Activated CD4-positive, alpha-beta memory T cell treated with anti-CD3 and anti-CD28 coated beads, Interleukin-2, amount 10 ng/mL, durations not matched to agents 7 days and 5 days (primary cell): ENCODE measurements at regions of chr11 and their contacts with region 1.

Region 1: GRCh38 chr11:60831143-60831500 is 10.8 kb upstream of the CCDC86 start:
- DNase-seq: peak; percentile 84
- H3K4me3 Mint-ChIP-seq: no peak overlapping the region
- H3K27ac Mint-ChIP-seq: no peak overlapping the region
- H3K4me1 Mint-ChIP-seq: peaks cover 30% of the 10 kb centered on the region
- H3K27me3 Mint-ChIP-seq: peaks cover 7% of the 10 kb centered on the region

Region 2: GRCh38 chr11:60775420-60775961 is 55.6 kb before region 1 on chr11:
- CTCF ChIA-PET with region 1: interaction called, 19 read pairs
- POLR2A ChIA-PET with region 1: no interaction called
- DNase-seq: peak; percentile 82
- H3K4me3 Mint-ChIP-seq: no peak overlapping the region
- H3K27ac Mint-ChIP-seq: no peak overlapping the region
- H3K4me1 Mint-ChIP-seq: peaks cover 4% of the 10 kb centered on the region
- H3K27me3 Mint-ChIP-seq: peaks cover 10% of the 10 kb centered on the region

Region 3: GRCh38 chr11:60810569-60810968 is 20.6 kb before region 1 on chr11:
- CTCF ChIA-PET with region 1: no interaction called
- POLR2A ChIA-PET with region 1: no interaction called
- DNase-seq: no peak
- H3K4me3 Mint-ChIP-seq: no peak overlapping the region
- H3K27ac Mint-ChIP-seq: no peak overlapping the region
- H3K4me1 Mint-ChIP-seq: no peaks in the 10 kb centered on the region
- H3K27me3 Mint-ChIP-seq: peaks cover 10% of the 10 kb centered on the region

Region 4: DNA sequence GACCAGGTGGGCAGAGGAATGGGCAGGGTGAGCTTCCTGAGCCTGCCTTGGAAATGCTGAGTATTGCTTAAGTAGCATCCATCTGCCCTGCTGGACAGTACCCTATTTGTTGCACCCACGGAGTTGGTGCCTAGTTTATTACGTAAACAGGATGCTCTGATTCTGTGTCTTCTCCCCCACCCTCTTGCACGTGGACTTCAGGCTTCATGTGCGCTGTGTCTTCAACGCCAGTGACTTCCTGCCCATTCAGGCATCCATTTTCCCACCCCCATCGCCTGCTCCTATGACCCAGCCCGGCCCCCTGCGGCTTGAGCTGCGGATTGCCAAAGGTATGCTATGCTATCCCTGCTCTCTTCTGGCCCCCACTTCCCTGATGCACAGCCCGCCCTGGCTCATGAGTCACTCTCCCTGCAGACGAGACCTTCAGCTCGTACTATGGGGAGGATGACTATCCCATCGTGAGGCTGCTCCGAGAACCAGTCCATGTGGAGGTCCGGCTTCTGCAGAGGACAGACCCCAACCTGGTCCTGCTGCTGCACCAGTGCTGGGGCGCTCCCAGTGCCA is 41.9 kb after region 1 on chr11:
- CTCF ChIA-PET with region 1: interaction called, 25 read pairs
- POLR2A ChIA-PET with region 1: interaction called, 9 read pairs
- DNase-seq: no peak
- H3K4me3 Mint-ChIP-seq: no peak overlapping the region
- H3K27ac Mint-ChIP-seq: no peak overlapping the region
- H3K4me1 Mint-ChIP-seq: peaks cover 61% of the 10 kb centered on the region
- H3K27me3 Mint-ChIP-seq: no peaks in the 10 kb centered on the region

Region 5: GRCh38 chr11:60906132-60906972 is 75.2 kb after region 1 on chr11 and contains the start of gene PRPF19:
- CTCF ChIA-PET with region 1: interaction called, 87 read pairs
- POLR2A ChIA-PET with region 1: interaction called, 5 read pairs
- DNase-seq: peak; percentile 99
- H3K4me3 Mint-ChIP-seq: peak within 1 kb of the TSS; percentile 83
- H3K27ac Mint-ChIP-seq: peak within 1 kb of the TSS; percentile 88
- H3K4me1 Mint-ChIP-seq: peaks cover 40% of the 10 kb centered on the region
- H3K27me3 Mint-ChIP-seq: peaks cover 16% of the 10 kb centered on the region
- total RNA-seq, gene PRPF19: 99.2 to 103 TPM

Region 6: GRCh38 chr11:61187505-61188130 is 356.5 kb after region 1 on chr11:
- CTCF ChIA-PET with region 1: interaction called, 11 read pairs
- POLR2A ChIA-PET with region 1: no interaction called
- DNase-seq: peak; percentile 80
- H3K4me3 Mint-ChIP-seq: no peak overlapping the region
- H3K27ac Mint-ChIP-seq: no peak overlapping the region
- H3K4me1 Mint-ChIP-seq: peaks cover 4% of the 10 kb centered on the region
- H3K27me3 Mint-ChIP-seq: peaks cover 10% of the 10 kb centered on the region